A673 (cell line): ENCODE measurements at regions of chr9 and their contacts with region 1.

Region 1: DNA sequence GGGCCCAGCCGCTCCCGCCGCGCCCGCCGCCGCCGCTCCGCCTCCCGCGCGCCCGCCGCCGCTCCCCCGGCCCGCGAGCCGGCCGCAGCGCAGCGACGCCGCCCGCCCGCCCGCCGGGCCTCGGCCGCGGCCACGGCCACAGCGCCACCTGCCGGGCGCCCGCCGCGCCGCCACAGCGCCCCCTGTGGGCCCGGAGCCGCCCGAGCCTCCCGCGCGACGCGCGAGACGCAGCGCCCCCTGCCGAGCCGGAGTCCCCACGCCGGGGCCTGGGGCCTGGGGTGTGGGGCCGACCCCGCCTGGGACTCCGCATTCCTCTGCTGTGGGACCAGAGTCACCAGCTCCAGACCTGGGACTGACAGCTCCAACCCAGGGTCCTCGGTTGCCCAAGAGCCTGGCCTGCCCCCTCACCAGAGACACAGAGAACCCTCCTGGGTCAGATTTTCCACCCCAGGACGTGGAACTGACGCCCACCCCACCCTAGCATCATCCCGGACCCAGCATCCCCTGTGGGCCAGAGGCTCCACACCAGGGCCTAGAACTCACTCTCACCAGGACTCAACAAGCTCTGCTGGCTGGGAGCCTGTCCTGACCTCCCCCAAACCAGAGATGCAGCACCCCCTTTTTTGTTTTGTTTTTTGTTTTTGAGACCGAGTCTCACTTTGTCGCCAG is at the start of gene RAPGEF1:
- DNase-seq: peak; percentile 73
- H3K4me3 ChIP-seq: peak within 1 kb of the TSS; percentile 79
- H3K27ac ChIP-seq: peak within 1 kb of the TSS; percentile 73
- H3K4me1 ChIP-seq: no peaks in the 10 kb centered on the region
- H3K27me3 ChIP-seq: no peaks in the 10 kb centered on the region
- CTCF ChIP-seq: peak; percentile 73
- total RNA-seq, gene RAPGEF1: 56.4 and 61.5 TPM in 2 replicates

Region 2: GRCh38 chr9:131502781-131503625 is 237.1 kb before region 1 on chr9 and contains the start of gene POMT1:
- CTCF ChIA-PET with region 1: no interaction called
- POLR2A ChIA-PET with region 1: no interaction called
- intact Hi-C with region 1: loop called (anchors 10 kb)
- DNase-seq: peak; percentile 93
- H3K4me3 ChIP-seq: peak within 1 kb of the TSS; percentile 96
- H3K27ac ChIP-seq: peak within 1 kb of the TSS; percentile 86
- H3K4me1 ChIP-seq: peaks cover 5% of the 10 kb centered on the region
- H3K27me3 ChIP-seq: no peaks in the 10 kb centered on the region
- CTCF ChIP-seq: no peak
- total RNA-seq, gene POMT1: 39.6 and 41.7 TPM in 2 replicates

Region 3: DNA sequence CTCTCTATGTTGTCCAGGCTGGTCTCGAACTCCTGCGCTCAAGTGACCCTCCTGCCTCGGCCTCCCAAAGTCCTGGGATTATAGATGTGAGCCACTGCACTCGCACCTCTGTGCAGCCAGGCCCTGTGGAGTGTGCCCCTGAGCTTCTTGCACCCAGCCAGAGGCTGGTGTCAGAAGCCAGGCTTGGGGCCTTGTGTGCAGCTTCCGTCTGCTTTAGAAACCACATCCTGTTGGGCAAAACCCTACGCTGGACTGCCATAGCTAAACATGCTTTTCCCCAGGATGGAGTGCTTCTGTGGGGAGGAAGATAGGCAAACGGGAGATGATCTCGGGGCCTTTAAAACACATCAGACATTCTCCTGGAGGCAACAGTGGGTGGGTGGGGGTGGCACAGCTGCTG is 154.7 kb before region 1 on chr9:
- CTCF ChIA-PET with region 1: no interaction called
- POLR2A ChIA-PET with region 1: interaction called, 13 read pairs
- intact Hi-C with region 1: no loop called
- DNase-seq: no peak
- H3K4me3 ChIP-seq: no peak overlapping the region
- H3K27ac ChIP-seq: no peak overlapping the region
- H3K4me1 ChIP-seq: no peaks in the 10 kb centered on the region
- H3K27me3 ChIP-seq: no peaks in the 10 kb centered on the region
- CTCF ChIP-seq: no peak

Region 4: DNA sequence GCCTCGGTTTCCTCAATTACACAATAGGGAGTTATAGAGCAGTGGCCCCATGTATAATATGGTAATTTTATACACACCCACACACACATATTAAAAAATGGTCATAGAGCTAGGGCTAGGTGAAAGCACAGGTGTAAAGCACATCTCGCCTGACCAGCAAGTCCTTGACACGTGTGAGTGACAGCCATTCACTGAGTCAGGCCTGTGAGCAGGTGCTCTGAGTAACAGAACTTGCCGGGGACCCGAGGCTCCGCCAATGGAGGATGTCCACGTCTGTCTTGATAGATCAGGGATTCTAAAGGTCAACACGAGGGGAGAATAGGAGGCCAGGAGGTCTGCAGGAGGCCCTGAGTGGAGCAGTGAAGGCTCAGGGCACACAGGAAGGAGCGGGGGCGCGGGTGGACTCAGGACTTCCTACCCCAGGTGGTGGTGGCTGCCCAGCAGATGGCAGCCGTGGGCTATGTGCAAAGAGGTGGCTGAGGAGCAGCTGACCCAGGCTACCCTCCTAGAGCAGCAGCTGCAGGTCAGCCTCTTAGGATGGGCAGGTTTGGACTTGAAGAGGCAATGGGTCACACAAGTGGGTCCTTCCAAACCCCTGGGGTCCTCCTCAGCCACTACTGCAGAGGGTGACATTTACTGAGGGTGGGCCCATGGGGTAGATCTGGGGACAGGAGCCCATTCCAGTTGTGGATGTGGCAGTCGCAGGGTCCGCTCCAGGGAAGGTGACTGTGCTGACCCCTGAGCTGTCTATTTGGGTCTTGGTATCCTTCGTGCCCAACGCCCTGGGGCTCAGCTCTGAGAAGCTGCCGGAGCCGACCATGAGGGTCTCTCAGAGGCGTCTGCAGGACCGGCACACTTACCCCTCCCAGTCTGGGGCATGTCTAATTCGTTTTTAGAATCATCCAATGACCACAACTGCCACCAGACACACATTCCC is 148.9 kb before region 1 on chr9:
- CTCF ChIA-PET with region 1: interaction called, 8 read pairs
- POLR2A ChIA-PET with region 1: no interaction called
- intact Hi-C with region 1: loop called (anchors 1 kb)
- DNase-seq: peak; percentile 75
- H3K4me3 ChIP-seq: no peak overlapping the region
- H3K27ac ChIP-seq: no peak overlapping the region
- H3K4me1 ChIP-seq: no peaks in the 10 kb centered on the region
- H3K27me3 ChIP-seq: no peaks in the 10 kb centered on the region
- CTCF ChIP-seq: peak; percentile 73